ENCODE measurements at regions of chr16 and their contacts with region 1.

Region 1: DNA sequence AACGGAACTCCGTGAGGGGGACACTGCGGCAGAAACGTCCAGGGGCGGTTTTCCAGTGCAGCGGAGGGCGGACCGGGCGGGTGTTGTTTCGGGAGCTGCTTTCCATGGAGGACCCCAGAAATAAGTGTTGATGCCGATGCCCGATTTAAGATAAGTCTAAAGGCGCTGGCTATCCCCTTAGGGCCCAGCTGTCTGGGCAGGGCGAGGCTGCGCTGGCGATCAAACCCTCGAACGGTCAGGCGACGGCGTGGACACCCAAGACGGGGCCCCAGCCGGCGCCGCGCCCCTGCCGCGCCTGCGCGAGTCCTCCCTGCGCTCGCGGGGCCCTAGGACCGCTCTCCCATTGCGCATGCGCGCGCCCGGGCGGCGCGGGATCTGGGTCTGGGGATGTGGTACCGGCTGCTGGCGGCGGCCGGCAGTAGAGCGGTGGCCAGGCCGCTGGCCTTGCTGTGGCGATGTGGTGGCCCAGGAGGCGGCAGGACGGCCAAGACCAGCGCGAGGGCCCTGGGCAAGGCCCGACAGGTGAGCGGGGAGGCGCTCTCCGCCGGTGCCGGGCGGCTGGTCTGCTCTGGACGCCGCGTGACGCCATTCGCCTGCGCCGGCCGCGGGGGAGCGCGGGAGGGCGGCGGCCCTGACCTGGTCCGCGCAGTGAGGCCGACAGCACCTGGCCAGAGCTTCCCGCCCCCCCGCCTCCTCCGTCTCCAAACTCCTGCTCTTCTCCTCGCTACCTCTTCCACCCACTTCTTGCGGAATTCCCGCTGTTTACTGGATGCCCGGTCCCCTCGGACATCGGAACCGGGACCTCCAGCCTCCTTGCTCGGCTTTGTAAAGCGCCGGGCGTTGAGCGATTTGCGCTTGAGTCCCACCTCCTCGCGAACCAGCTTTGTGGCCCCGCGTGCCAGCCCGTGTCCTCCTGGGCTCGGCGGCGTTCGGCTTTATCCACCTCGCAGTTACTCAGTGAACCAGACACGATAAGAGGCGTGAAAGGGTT is 24.0 kb downstream of the DEF8 start:
- DNase-seq: peak; percentile 93
- ATAC-seq: peak; percentile 95
- H3K4me3 Mint-ChIP-seq: peak overlapping the region; percentile 98
- H3K27ac Mint-ChIP-seq: peak overlapping the region; percentile 98
- H3K4me1 Mint-ChIP-seq: peaks cover 34% of the 10 kb centered on the region
- H3K27me3 Mint-ChIP-seq: no peaks in the 10 kb centered on the region

Region 2: GRCh38 chr16:89949121-89949742 is 23.3 kb before region 1 on chr16:
- CTCF ChIA-PET with region 1: interaction called, 3 read pairs
- POLR2A ChIA-PET with region 1: interaction called, 13 read pairs
- DNase-seq: no peak
- ATAC-seq: no peak
- H3K4me3 Mint-ChIP-seq: peak overlapping the region; percentile 76
- H3K27ac Mint-ChIP-seq: no peak overlapping the region
- H3K4me1 Mint-ChIP-seq: peaks cover 12% of the 10 kb centered on the region
- H3K27me3 Mint-ChIP-seq: peaks cover 20% of the 10 kb centered on the region